A549 (cell line): ENCODE measurements at regions of chr5 and their contacts with region 1.

Region 1: DNA sequence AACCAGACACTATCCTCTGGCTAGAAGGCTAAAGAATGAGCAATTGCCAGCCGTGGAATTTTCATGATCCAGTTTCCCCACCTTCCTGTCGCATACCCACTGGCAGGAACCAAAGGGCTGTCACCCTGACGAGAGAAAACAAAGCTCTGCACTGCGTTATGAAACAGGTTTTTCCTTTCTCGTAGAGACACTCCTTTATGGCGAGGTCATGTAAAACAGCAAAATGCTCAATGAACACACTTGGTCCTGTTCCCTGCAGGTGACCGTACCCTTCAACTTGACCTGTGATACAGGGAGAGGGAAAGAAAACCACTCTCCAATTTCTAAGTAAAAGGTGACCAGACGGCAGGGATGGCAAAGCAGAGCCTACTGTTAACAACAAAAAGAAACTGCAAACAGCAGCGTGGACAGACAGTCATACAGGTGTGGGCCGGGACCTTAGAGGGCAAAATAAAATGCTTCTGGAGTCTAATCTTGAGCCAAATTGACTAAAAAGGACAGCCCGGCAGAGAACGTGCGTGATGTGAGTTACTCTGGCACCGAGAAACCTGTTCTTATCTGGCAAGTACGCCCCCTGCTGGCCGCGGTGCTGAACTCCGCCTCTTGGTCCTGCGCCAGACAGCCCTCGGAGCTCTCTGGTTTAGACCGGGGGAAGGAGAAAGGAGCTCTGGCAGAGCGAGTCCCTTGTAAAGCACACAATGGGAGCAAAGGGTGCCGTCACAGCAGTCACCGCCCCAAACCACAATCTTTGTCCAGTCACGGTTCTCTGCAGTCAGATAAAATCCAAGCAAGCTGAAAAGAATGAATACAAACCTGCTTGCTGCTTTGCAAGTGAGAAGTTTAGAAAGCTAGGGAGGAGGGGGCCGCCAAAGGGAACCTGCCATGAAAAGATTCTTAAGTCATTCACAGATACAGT is 98.9 kb downstream of the EFNA5 start:
- DNase-seq: peak; percentile 72 to 96
- ATAC-seq: peak; percentile 90 to 92
- H3K4me3 ChIP-seq: peak overlapping the region; percentile 39
- H3K27ac ChIP-seq: peak overlapping the region; percentile 78 to 89
- H3K4me1 ChIP-seq: peaks cover 82% of the 10 kb centered on the region
- CTCF ChIP-seq: peak; percentile 84
- EP300 ChIP-seq: no peak
- POLR2A ChIP-seq: no peak
- RAD21 ChIP-seq: peak; percentile 82 to 90

Region 2: DNA sequence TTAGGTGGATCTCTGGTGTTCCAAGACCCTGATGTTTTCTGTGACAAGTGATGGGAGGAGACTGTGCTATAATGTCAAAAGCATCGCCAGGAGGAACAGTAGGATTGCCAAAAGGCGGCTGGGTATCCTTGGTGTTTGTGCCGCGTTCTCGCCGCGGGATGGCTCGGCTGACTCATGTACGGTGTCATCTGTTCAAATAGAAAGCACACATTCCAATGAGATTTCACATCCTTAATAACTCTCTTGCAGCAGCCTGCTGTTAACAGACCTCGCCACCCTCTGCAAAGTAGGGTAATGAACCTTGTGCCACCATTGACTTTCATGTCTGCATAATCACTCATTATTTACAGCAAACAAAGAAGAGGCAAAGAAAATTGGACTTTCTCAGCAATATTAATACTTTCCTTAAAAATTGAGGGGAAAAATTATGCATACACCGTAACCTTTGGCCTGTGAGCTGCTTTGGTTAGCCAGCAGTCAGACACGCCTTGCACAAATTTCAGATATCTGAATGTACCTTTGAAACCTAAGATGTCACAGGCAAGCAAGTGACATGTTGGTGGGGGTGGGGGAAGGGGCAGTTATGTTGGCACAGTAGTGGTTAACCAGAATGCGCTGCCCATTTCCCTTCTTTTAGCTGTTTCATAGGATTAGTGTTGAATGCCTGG is 190.6 kb before region 1 on chr5:
- CTCF ChIA-PET with region 1: interaction called, 11 read pairs
- POLR2A ChIA-PET with region 1: interaction called, 4 read pairs
- DNase-seq: peak; percentile 80 to 95
- ATAC-seq: peak; percentile 91 to 96
- H3K4me3 ChIP-seq: peak overlapping the region; percentile 9; the same call in 1 of the 3 replicates
- H3K27ac ChIP-seq: peak overlapping the region; percentile 88 to 92
- H3K4me1 ChIP-seq: peaks cover 91% of the 10 kb centered on the region
- CTCF ChIP-seq: no peak
- EP300 ChIP-seq: peak; percentile 75 to 88; a peak in 3 of 5 replicates
- POLR2A ChIP-seq: no peak
- RAD21 ChIP-seq: peak; percentile 39 to 70

Region 3: GRCh38 chr5:107464416-107464815 is 107.5 kb before region 1 on chr5:
- CTCF ChIA-PET with region 1: interaction called, 14 read pairs
- POLR2A ChIA-PET with region 1: interaction called, 13 read pairs
- DNase-seq: no peak
- ATAC-seq: no peak
- H3K4me3 ChIP-seq: no peak overlapping the region
- H3K27ac ChIP-seq: peak overlapping the region; percentile 94
- H3K4me1 ChIP-seq: peaks cover 96% of the 10 kb centered on the region
- CTCF ChIP-seq: no peak
- EP300 ChIP-seq: no peak
- POLR2A ChIP-seq: no peak
- RAD21 ChIP-seq: no peak

Region 4: GRCh38 chr5:107542428-107542827 is 29.5 kb before region 1 on chr5:
- CTCF ChIA-PET with region 1: interaction called, 9 read pairs
- POLR2A ChIA-PET with region 1: interaction called, 19 read pairs
- DNase-seq: peak; percentile 86 to 97
- ATAC-seq: peak; percentile 89 to 91
- H3K4me3 ChIP-seq: peak overlapping the region; percentile 34
- H3K27ac ChIP-seq: peak overlapping the region; percentile 85 to 90
- H3K4me1 ChIP-seq: peaks cover 81% of the 10 kb centered on the region
- CTCF ChIP-seq: no peak
- EP300 ChIP-seq: peak in 1 of 2 experiments; percentile 67; a peak in 1 of 5 replicates
- POLR2A ChIP-seq: no peak
- RAD21 ChIP-seq: peak; percentile 14 to 56; a peak in 4 of 5 replicates

Region 5: DNA sequence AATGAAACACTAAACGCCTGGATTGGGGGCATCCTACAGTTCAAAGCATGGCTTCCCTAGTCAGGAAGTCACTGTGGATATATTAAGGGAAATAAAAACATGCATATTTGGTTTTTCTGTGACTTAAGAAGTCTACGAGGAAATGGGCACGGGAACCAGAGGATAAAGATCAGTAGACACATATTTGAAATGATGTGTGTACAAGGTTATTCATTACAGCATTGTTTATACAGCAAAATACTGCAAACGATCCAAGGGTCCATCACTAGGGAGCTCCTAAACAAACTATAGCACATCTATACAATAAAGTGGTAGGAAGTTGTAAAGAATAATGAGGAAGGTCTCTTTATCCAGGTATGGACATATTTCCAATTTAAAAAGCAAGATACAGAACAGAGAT is 27.1 kb after region 1 on chr5:
- CTCF ChIA-PET with region 1: interaction called, 11 read pairs
- POLR2A ChIA-PET with region 1: no interaction called
- DNase-seq: peak in 1 of 2 experiments; percentile 62
- ATAC-seq: peak in 1 of 2 experiments; percentile 81; a peak in 3 of 6 replicates
- H3K4me3 ChIP-seq: no peak overlapping the region
- H3K27ac ChIP-seq: peak overlapping the region; percentile 8 to 9; a peak in 3 of 6 replicates
- H3K4me1 ChIP-seq: peaks cover 59% of the 10 kb centered on the region
- CTCF ChIP-seq: no peak
- EP300 ChIP-seq: no peak
- POLR2A ChIP-seq: no peak
- RAD21 ChIP-seq: no peak